ENCODE measurements at regions of chr10 and their contacts with region 1.

Region 1: DNA sequence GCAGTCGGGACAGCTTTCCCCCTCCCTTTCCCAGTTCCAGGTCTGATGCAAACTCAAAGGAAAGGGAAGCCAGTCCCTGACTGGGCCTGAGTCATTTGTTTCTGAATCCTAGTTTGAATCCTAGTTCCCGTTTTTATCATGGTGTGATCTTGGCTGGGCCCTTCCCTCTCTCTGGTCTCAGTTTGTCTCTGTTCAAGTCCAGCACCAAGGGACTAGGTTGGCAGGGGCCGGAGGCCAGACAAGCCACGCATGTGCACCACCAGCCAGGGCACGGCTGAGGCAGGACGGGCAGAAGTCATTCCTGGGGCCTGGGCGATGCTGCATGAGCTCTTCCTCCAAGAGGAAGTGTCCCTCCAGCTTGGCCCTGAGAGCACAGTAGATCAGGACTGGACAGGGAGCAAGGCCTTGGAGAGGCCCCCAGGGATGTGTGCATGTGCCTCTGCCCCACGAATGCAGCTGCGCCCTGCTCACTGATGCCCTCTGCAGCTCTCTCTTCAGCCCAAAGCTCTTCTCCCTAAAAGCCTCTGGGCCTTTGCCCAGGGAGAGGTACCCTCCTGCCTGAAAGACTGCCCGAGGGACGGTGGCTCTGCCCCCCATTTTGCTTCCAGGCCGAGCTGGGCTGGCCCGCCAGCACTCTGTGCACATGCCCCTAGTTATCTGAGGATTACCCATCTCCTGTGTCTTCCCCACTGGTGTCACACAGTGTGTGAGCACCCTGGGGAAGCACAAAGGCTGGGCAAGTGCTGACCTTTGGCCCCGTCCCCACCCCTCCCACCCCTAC is 86.7 kb downstream of the ZMIZ1 start:
- DNase-seq: no peak
- ATAC-seq: no peak

Region 2: DNA sequence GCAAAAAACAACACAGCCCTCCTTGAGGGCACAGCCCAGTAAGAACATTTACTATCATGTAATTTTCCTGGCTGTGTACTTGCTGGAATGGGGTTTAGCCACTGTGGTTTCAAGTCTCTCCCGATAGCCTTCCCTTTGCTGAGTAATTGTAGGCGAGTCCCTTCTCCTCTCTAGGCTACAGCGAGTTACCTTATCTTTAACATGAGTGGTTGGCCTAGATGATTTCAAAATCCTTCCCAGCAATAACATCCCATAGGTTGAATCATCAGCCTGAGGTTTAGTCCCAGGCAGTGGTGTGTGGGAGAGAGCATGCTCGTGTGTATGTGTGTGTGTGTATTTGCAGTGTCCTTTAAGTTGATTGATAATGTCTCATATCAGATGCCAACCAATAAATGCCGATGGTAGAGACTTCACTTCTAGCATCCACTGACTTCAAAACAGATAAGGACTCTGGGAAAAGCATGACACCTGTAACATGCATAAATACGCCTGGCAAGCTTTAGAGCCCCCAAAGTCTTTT is 229.6 kb before region 1 on chr10:
- intact Hi-C with region 1: loop called (anchors 2 kb)
- DNase-seq: no peak
- ATAC-seq: no peak

Region 3: DNA sequence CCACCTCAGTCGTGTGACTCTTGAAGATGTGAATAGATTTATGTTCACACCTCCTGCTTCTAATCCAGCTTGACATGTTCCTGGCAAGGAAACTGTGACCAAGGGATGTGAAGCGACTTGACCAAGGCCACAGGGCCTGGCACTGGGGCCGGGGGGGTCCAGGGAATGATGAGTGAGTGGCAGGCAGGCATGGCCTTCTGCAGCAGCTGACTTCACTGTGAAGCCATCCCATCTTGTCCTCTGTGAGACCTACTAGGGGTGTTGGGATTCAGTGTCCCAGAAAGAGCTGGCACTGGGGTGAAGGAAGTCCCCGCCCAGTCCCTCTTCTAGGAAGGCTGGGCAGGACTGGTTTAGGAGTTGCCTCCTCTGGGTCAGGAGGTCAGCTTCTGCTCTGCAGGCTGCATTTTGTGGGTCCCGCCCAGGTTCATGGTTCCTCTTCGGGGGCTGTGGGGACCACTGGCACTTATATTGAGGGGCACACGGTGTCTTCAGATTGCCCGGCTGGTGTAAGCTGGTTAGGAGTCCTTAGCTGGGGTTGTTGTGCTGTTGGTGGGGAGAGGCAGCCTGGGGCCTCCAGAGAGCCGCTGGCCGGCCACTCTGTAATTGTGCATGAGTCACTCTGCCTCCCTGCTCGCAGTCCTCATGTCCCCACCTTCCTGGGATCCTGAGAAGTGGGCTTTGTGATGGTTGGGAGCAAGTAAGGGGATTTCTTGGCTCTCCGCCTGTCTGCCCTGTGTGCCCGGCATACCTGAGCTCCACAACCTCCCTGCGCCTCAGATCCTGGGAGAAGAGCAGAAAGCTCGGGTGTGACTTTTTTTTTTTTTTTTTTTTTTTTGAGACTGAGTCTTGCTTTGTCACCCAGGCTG is 75.8 kb before region 1 on chr10:
- intact Hi-C with region 1: loop called (anchors 2 kb)
- DNase-seq: peak; percentile 73
- ATAC-seq: peak; percentile 58

Measured in Right ventricle myocardium inferior (tissue), 1 donor.